ENCODE measurements at regions of chr12 and their contacts with region 1.

Region 1: DNA sequence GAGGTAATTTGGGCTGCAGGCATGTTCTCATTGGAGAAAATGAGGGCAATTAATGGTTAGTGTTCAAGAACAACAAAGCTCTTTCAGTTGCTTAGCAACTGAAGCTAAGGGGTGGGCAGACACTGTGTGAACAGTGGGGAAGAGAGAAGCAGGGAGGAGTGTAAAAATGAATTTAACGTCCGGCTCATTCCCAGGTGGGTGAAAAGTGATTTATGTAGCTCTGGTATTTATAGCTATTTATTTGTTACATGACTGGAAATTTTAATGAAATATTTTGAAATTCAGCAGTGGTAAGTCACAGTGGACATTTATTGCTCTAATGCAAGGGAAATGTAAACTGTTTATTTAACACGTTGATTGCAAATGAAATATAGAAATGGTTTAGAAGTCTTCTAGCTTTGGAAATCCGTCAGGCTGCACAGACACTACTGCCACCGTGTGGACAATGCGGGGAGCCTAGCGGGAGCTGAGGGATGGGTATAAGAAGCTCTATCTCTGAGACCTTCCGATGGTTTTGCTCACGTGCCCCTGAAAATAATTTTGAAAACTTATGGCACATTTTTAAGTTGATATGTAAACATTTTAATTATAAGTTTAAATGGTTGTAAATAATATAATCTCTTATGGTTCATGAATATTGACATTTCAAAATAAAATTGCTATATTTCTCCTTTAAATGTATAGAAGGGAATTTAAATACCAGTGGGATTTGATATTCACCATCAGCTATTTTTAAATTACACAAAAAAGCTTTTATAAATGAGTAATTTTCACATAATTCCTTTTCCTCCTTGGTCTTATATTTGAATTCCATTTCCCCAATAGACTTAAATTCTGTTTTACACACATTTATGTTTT is 54.4 kb downstream of the E2F7 start:
- DNase-seq: peak; percentile 69 to 76
- ATAC-seq: peak; percentile 96
- H3K4me3 ChIP-seq: no peak overlapping the region
- H3K27ac ChIP-seq: no peak overlapping the region
- H3K4me1 ChIP-seq: no peaks in the 10 kb centered on the region
- CTCF ChIP-seq: peak; percentile 94
- EP300 ChIP-seq: no peak
- POLR2A ChIP-seq: no peak
- RAD21 ChIP-seq: peak; percentile 81 to 85

Region 2: DNA sequence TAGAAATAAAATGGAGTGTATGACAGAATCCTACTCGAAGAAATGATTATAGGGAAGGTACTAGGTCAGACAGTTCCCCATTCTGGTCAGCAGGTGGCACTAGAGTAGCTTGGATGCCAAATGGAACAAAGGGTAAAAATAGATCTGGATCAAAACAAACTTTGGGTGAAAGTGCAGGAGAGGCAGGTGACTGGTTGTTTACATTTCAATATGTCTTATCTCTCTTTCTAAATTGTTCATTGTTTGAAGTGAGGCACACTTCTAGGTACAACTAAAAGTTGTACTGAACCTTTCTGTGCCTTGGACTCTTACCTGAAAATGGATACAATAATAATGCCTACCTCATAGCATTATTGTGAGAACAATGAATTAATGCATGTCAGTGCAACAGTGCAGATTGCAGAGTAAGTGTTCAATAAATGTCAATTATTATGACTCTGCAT is 389.3 kb before region 1 on chr12:
- CTCF ChIA-PET with region 1: interaction called, 41 read pairs
- POLR2A ChIA-PET with region 1: no interaction called
- DNase-seq: peak; percentile 68 to 73
- ATAC-seq: peak; percentile 85 to 92; a peak in 5 of 6 replicates
- H3K4me3 ChIP-seq: no peak overlapping the region
- H3K27ac ChIP-seq: no peak overlapping the region
- H3K4me1 ChIP-seq: no peaks in the 10 kb centered on the region
- CTCF ChIP-seq: peak; percentile 96
- EP300 ChIP-seq: no peak
- POLR2A ChIP-seq: no peak
- RAD21 ChIP-seq: peak; percentile 97 to 99

Region 3: DNA sequence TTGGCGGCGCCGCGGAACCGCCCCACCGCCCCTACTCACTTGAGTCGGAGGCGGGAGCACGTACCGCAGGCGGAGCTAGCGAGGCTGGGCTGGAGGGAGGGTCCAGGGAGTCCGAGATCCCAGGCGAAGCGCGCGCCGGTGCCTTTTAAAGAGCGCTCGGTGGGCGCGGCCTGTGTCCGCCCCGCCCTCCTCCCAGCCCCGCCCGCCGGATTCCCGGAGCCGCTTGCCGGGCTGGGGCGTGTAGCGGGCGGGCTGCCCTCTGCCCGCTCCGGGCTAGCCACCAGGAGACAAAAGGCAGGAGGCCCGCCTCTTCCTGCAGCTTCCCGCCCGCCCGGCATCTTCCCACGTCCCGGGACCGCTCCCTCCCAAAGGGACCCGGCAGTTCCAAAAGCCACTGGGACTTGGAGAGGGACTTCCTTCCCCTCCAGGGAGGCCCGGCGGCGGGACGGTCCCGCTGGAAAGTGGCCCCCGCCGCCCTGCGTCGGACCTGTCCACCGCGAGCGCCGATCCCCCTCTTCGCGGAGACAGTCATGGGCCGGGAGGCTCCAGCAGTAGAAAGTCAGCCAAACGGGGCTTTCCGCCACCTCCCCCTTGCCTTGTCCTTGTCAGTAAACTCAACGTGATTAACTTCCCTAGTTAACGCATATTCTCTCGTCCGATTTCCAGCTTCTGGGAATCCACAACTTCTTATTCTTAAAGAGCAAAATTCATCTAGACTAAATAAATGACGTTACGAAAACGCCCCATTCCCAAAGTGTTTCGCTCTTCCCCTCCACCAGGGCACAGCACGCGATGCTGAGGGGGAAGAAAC is 131.8 kb before region 1 on chr12 and contains the start of gene CSRP2:
- CTCF ChIA-PET with region 1: interaction called, 3 read pairs
- POLR2A ChIA-PET with region 1: interaction called, 11 read pairs
- DNase-seq: peak; percentile 86 to 91
- ATAC-seq: peak; percentile 86 to 95
- H3K4me3 ChIP-seq: peak within 1 kb of the TSS; percentile 56
- H3K27ac ChIP-seq: peak within 1 kb of the TSS; percentile 87 to 88
- H3K4me1 ChIP-seq: peaks cover 10% of the 10 kb centered on the region; the same call in 2 of the 3 replicates
- CTCF ChIP-seq: no peak
- EP300 ChIP-seq: no peak
- POLR2A ChIP-seq: peak; percentile 89
- RAD21 ChIP-seq: no peak
- polyA plus RNA-seq, gene CSRP2: 19.2 and 19.5 TPM in 2 replicates

Region 4: GRCh38 chr12:76990716-76991115 is 20.2 kb before region 1 on chr12:
- CTCF ChIA-PET with region 1: interaction called, 38 read pairs
- POLR2A ChIA-PET with region 1: no interaction called
- DNase-seq: no peak
- ATAC-seq: no peak
- H3K4me3 ChIP-seq: no peak overlapping the region
- H3K27ac ChIP-seq: no peak overlapping the region
- H3K4me1 ChIP-seq: no peaks in the 10 kb centered on the region
- CTCF ChIP-seq: no peak
- EP300 ChIP-seq: no peak
- POLR2A ChIP-seq: no peak
- RAD21 ChIP-seq: no peak

Region 5: DNA sequence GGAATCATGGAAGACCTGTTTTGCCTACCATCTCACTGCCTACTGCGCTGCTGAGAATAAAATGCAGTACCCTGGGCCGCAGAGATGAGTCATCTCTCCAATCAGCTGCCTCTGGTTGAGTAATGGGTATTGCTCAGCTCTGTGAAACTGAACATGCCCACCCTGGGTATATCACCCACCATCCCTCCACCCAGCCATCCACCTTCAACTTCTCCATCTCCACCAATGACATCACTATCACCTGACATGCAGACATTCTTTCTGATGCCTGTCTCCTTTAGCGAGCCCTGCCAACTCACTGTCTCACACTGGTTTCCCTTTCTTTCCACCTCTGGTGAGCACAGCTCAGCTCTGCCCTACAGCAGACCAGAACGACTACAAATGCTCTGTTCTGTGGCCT is 20.8 kb after region 1 on chr12:
- CTCF ChIA-PET with region 1: interaction called, 11 read pairs
- POLR2A ChIA-PET with region 1: no interaction called
- DNase-seq: no peak
- ATAC-seq: peak in 1 of 2 experiments; percentile 19; a peak in 1 of 6 replicates
- H3K4me3 ChIP-seq: no peak overlapping the region
- H3K27ac ChIP-seq: no peak overlapping the region
- H3K4me1 ChIP-seq: no peaks in the 10 kb centered on the region
- CTCF ChIP-seq: no peak
- EP300 ChIP-seq: no peak
- POLR2A ChIP-seq: no peak
- RAD21 ChIP-seq: no peak

Measured in A549 (cell line).